Endothelial cell of umbilical vein (primary cell): ENCODE measurements at regions of chr20 and their contacts with region 1.

Region 1: DNA sequence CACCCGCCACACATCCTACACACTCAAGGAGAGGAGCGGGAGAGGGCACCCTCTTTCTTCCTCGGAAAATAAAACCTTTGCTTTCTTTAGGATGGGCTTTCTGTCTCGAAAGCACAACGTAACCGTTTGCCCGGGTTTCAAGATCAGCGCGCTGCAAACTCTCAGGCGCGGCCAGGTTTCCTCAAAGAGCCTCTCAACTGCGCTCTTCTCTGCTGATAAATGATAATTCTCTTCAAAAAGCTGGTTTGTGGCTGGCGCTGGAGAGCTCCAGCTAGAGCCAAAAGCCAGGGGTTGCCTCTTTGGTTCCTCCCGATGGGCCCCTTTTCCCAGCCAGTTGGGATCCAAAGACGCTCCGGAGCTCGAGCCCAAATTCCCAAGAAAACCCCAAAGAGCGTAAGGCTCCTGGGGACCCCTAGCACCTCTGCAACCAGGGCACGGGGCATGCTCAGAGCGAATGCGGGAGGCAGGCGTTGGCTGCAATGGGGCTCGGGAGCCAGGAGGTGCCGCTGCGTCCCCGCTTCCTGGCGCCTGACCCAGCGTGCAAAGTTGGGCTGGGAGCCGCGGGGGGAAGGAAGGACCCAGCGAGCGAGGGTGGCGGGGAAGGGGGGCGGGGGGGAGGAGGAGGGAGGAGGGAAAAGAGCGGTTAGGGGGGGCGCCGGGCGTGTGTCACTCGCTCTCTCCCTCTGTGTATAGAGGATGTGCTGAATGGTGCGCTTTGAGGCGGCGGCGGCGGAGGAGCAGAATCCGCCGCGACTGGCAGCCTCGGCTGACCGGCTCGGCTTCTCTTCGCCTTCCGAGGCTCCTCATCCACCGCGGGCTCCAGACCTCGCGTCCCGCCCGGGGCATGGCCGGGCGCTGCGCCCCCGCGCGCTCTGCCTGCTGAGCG is at the start of gene PLCB1:
- DNase-seq: peak; percentile 79
- H3K4me3 ChIP-seq: peak within 1 kb of the TSS; percentile 65 to 92 (median 83)
- H3K27ac ChIP-seq: peak within 1 kb of the TSS; percentile 37
- H3K4me1 ChIP-seq: peaks cover 12% of the 10 kb centered on the region
- H3K27me3 ChIP-seq: no peaks in the 10 kb centered on the region
- CTCF ChIP-seq: peak; percentile 88 to 93
- POLR2A ChIP-seq: peak; percentile 39
- total RNA-seq, gene PLCB1: 38.6 and 53.4 TPM in 2 replicates

Region 2: GRCh38 chr20:7695635-7696034 is 436.2 kb before region 1 on chr20:
- CTCF ChIA-PET with region 1: no interaction called
- POLR2A ChIA-PET with region 1: no interaction called
- dilution Hi-C with region 1: no loop called
- intact Hi-C with region 1: no loop called
- DNase-seq: no peak
- H3K4me3 ChIP-seq: no peak overlapping the region
- H3K27ac ChIP-seq: no peak overlapping the region
- H3K4me1 ChIP-seq: no peaks in the 10 kb centered on the region
- H3K27me3 ChIP-seq: no peaks in the 10 kb centered on the region
- CTCF ChIP-seq: no peak
- POLR2A ChIP-seq: no peak

Region 3: GRCh38 chr20:7935027-7935551 is 196.8 kb before region 1 on chr20:
- CTCF ChIA-PET with region 1: interaction called, 6 read pairs
- POLR2A ChIA-PET with region 1: no interaction called
- dilution Hi-C with region 1: no loop called
- intact Hi-C with region 1: loop called (anchors 5 kb)
- DNase-seq: no peak
- H3K4me3 ChIP-seq: no peak overlapping the region
- H3K27ac ChIP-seq: no peak overlapping the region
- H3K4me1 ChIP-seq: peaks cover 10% of the 10 kb centered on the region
- H3K27me3 ChIP-seq: no peaks in the 10 kb centered on the region
- CTCF ChIP-seq: no peak
- POLR2A ChIP-seq: no peak

Region 4: DNA sequence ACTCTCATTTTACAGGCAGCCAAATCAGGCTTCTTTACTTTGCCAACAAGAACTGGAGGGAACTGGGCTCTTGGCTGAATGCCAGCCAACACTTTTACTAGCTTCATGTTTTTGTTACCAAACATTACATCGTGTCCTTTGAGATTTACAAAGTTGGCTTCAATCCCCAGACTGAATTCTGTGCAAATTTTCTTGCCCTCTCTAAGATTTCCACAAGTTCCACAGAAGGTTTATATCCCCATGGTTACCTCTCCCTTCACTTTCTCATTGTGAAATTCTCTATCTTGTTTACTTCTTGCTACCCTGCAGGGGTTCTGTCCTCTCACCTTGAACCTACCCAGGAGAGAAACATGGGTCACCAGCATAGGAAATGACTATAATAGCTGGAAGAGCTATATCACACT is 37.4 kb before region 1 on chr20:
- CTCF ChIA-PET with region 1: interaction called, 3 read pairs
- POLR2A ChIA-PET with region 1: no interaction called
- dilution Hi-C with region 1: no loop called
- intact Hi-C with region 1: loop called (anchors 1 kb)
- DNase-seq: peak; percentile 87
- H3K4me3 ChIP-seq: no peak overlapping the region
- H3K27ac ChIP-seq: peak overlapping the region; percentile 94
- H3K4me1 ChIP-seq: peaks cover 25% of the 10 kb centered on the region
- H3K27me3 ChIP-seq: no peaks in the 10 kb centered on the region
- CTCF ChIP-seq: no peak
- POLR2A ChIP-seq: no peak

Region 5: DNA sequence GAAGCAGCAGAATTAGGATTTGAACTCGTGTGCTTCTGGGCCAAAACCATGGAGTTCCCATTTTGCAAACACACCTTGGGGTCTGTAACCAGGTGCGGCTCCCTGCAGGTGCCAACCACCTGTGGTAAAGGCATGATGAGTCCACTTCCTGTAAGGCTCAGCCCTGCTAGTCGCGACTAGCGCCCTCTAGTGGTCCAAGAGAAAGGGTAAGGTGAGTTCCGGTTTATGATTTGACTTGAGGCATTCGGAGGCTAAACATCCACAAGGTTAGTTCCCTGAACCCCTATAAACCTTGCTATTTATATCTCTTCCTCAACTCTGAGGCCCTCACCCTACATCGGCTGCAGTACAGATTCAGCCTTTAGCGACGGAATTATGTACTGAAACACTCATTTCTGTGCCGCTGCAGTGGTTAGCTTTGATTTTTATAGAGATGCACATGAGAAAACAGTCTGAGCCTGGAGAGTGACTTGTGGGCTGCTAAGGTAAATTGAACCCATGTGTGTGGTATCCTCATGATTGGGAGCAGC is 173.7 kb after region 1 on chr20:
- CTCF ChIA-PET with region 1: interaction called, 10 read pairs
- POLR2A ChIA-PET with region 1: no interaction called
- dilution Hi-C with region 1: no loop called
- intact Hi-C with region 1: loop called (anchors 1 kb)
- DNase-seq: peak; percentile 42
- H3K4me3 ChIP-seq: no peak overlapping the region
- H3K27ac ChIP-seq: no peak overlapping the region
- H3K4me1 ChIP-seq: no peaks in the 10 kb centered on the region
- H3K27me3 ChIP-seq: no peaks in the 10 kb centered on the region
- CTCF ChIP-seq: peak; percentile 67 to 79
- POLR2A ChIP-seq: no peak

Region 6: GRCh38 chr20:8454137-8454712 is 322.4 kb after region 1 on chr20:
- CTCF ChIA-PET with region 1: interaction called, 6 read pairs
- POLR2A ChIA-PET with region 1: no interaction called
- dilution Hi-C with region 1: no loop called
- intact Hi-C with region 1: loop called (anchors 1 kb)
- DNase-seq: peak; percentile 80
- H3K4me3 ChIP-seq: no peak overlapping the region
- H3K27ac ChIP-seq: no peak overlapping the region
- H3K4me1 ChIP-seq: no peaks in the 10 kb centered on the region
- H3K27me3 ChIP-seq: no peaks in the 10 kb centered on the region
- CTCF ChIP-seq: peak; percentile 40 to 42
- POLR2A ChIP-seq: no peak

Region 7: DNA sequence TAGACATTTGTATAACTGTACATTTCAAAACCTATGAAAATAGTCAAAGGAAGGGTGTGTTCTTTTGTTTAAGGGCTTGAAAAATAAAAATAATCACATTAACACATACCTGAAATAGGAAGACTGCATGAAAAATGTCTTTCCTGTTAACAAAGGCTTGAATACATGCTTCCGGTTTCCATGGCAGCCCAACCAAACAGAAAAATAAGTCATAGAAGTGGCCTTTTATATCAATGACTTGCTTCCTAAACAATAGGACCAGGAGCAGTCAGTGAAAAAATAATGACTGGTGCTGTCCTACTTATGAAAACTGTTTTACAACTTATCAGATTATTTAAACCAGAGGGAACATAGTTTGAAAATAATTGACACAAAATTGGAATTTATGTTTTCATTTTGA is 524.5 kb after region 1 on chr20:
- CTCF ChIA-PET with region 1: no interaction called
- POLR2A ChIA-PET with region 1: no interaction called
- dilution Hi-C with region 1: no loop called
- intact Hi-C with region 1: loop called (anchors 5 kb)
- DNase-seq: peak; percentile 95
- H3K4me3 ChIP-seq: no peak overlapping the region
- H3K27ac ChIP-seq: peak overlapping the region; percentile 65
- H3K4me1 ChIP-seq: peaks cover 32% of the 10 kb centered on the region
- H3K27me3 ChIP-seq: no peaks in the 10 kb centered on the region
- CTCF ChIP-seq: no peak
- POLR2A ChIP-seq: no peak